Activated CD4-positive, alpha-beta T cell treated with anti-CD3 and anti-CD28 coated beads for 36 hours (primary cell): ENCODE measurements at regions of chr19 and their contacts with region 1.

Region 1: GRCh38 chr19:12847159-12848139 is 9.1 kb downstream of the MAST1 start:
- DNase-seq: peak; percentile 94
- ATAC-seq: peak; percentile 98
- H3K4me3 Mint-ChIP-seq: peak overlapping the region; percentile 57
- H3K27ac Mint-ChIP-seq: no peak overlapping the region
- H3K4me1 Mint-ChIP-seq: peaks cover 7% of the 10 kb centered on the region
- H3K27me3 Mint-ChIP-seq: peaks cover 24% of the 10 kb centered on the region

Region 2: GRCh38 chr19:12208221-12208620 is 639.2 kb before region 1 on chr19:
- CTCF ChIA-PET with region 1: no interaction called
- POLR2A ChIA-PET with region 1: no interaction called
- intact Hi-C with region 1: no loop called
- DNase-seq: no peak
- ATAC-seq: no peak
- H3K4me3 Mint-ChIP-seq: no peak overlapping the region
- H3K27ac Mint-ChIP-seq: no peak overlapping the region
- H3K4me1 Mint-ChIP-seq: no peaks in the 10 kb centered on the region
- H3K27me3 Mint-ChIP-seq: no peaks in the 10 kb centered on the region

Region 3: DNA sequence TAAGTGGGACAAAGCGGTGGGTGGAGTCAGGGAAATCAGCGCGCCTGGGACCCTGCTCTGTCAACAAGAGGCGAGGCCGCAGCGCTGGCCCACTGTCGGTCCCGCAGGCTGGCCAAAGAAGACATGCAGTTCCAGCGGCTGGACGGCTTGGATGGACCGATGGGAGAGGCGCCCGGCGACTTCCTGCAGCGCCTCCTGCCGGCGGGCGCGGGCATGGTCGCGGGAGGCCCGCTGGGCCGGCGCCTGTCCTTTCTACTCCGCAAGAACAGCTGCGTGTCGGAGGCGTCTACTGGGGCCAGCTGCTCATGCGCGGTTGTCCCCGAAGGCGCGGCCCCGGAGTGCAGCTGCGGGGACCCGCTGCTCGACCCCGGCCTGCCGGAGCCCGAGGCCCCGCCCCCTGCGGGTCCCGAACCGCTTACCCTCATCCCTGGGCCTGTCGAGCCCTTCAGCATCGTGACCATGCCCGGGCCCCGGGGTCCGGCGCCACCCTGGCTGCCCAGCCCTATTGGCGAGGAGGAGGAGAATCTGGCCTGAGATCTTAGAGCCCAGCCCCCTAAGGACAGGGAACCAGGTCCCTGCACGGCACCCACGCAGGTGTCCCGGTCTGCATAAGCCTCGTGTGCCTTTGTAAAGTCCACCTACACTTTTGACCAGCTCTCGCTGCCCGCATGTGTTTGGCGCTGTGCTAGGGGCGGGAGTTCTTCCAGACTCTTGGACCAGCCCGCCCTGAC is 89.7 kb before region 1 on chr19:
- CTCF ChIA-PET with region 1: interaction called, 153 read pairs
- POLR2A ChIA-PET with region 1: no interaction called
- intact Hi-C with region 1: loop called (anchors 1 kb)
- DNase-seq: peak; percentile 83
- ATAC-seq: peak; percentile 84
- H3K4me3 Mint-ChIP-seq: peak overlapping the region; percentile 19
- H3K27ac Mint-ChIP-seq: no peak overlapping the region
- H3K4me1 Mint-ChIP-seq: peaks cover 6% of the 10 kb centered on the region
- H3K27me3 Mint-ChIP-seq: peaks cover 20% of the 10 kb centered on the region

Region 4: GRCh38 chr19:12796146-12797071 is 51.0 kb before region 1 on chr19:
- CTCF ChIA-PET with region 1: interaction called, 12 read pairs
- POLR2A ChIA-PET with region 1: no interaction called
- intact Hi-C with region 1: loop called (anchors 1 to 5 kb)
- DNase-seq: peak; percentile 87
- ATAC-seq: peak; percentile 14
- H3K4me3 Mint-ChIP-seq: peak overlapping the region; percentile 63
- H3K27ac Mint-ChIP-seq: peak overlapping the region; percentile 84
- H3K4me1 Mint-ChIP-seq: peaks cover 35% of the 10 kb centered on the region
- H3K27me3 Mint-ChIP-seq: no peaks in the 10 kb centered on the region

Region 5: GRCh38 chr19:12867120-12868099 is 20.0 kb after region 1 on chr19:
- CTCF ChIA-PET with region 1: interaction called, 11 read pairs
- POLR2A ChIA-PET with region 1: no interaction called
- intact Hi-C with region 1: no loop called
- DNase-seq: peak; percentile 86
- ATAC-seq: peak; percentile 79
- H3K4me3 Mint-ChIP-seq: peak overlapping the region; percentile 54
- H3K27ac Mint-ChIP-seq: no peak overlapping the region
- H3K4me1 Mint-ChIP-seq: peaks cover 7% of the 10 kb centered on the region
- H3K27me3 Mint-ChIP-seq: peaks cover 4% of the 10 kb centered on the region